Mammary epithelial cell (primary cell): ENCODE measurements at regions of chr2 and their contacts with region 1.

Region 1: GRCh38 chr2:129849559-129850160 is 129.8 kb upstream of the RAB6C start:
- DNase-seq: peak; percentile 50
- H3K4me3 ChIP-seq: no peak overlapping the region
- H3K27ac ChIP-seq: no peak overlapping the region
- H3K4me1 ChIP-seq: no peaks in the 10 kb centered on the region
- H3K27me3 ChIP-seq: no peaks in the 10 kb centered on the region
- CTCF ChIP-seq: peak; percentile 63 to 75

Region 2: GRCh38 chr2:129929321-129930290 is 79.9 kb after region 1 on chr2:
- CTCF ChIA-PET with region 1: no interaction called
- dilution Hi-C with region 1: loop called (anchors 5 kb)
- in situ Hi-C with region 1: no loop called
- intact Hi-C with region 1: no loop called
- DNase-seq: peak; percentile 12
- H3K4me3 ChIP-seq: no peak overlapping the region
- H3K27ac ChIP-seq: no peak overlapping the region
- H3K4me1 ChIP-seq: no peaks in the 10 kb centered on the region
- H3K27me3 ChIP-seq: no peaks in the 10 kb centered on the region
- CTCF ChIP-seq: no peak